Activated CD4-positive, alpha-beta T cell treated with anti-CD3 and anti-CD28 coated beads, Interleukin-2, amount 10 ng/mL, durations not matched to agents 7 days and 5 days (primary cell): ENCODE measurements at regions of chr22 and their contacts with region 1.

Region 1: GRCh38 chr22:36856121-36856791 is 4.5 kb upstream of the NCF4 start:
- DNase-seq: peak; percentile 94
- H3K4me3 Mint-ChIP-seq: no peak overlapping the region
- H3K27ac Mint-ChIP-seq: peak overlapping the region; percentile 57
- H3K4me1 Mint-ChIP-seq: peaks cover 48% of the 10 kb centered on the region
- H3K27me3 Mint-ChIP-seq: peaks cover 8% of the 10 kb centered on the region

Region 2: DNA sequence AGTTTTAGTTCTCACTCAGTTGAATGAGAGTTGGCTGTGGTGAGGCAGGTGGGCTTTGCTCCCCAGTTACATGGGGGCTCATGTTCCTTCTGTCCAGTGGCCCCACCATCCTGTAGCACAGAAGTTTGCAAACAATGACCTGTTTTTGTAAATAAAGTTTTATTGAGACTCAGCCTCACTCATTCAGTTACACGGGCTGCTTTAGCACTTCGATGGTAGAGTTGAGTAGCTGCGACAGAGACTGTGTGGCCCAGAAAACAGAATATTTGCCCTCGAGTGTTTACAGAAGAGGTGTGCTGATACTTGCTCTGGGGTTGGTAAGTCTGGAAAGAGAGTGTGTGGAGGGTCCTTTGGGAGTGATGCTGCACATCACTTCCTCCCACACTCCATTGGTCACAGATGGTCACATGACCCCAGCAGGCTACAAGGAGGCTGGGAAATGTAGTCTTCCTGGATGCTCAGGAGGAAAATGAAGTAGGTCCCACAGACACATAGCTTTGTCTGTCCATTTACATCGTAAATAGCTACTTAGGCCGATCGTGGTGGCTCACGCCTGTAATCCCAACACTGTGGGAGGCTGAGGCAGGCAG is 115.0 kb before region 1 on chr22:
- CTCF ChIA-PET with region 1: no interaction called
- POLR2A ChIA-PET with region 1: no interaction called
- DNase-seq: no peak
- H3K4me3 Mint-ChIP-seq: no peak overlapping the region
- H3K27ac Mint-ChIP-seq: no peak overlapping the region
- H3K4me1 Mint-ChIP-seq: no peaks in the 10 kb centered on the region
- H3K27me3 Mint-ChIP-seq: peaks cover 9% of the 10 kb centered on the region

Region 3: GRCh38 chr22:36781656-36782627 is 74.3 kb before region 1 on chr22:
- CTCF ChIA-PET with region 1: interaction called, 25 read pairs
- POLR2A ChIA-PET with region 1: no interaction called
- DNase-seq: peak; percentile 87
- H3K4me3 Mint-ChIP-seq: no peak overlapping the region
- H3K27ac Mint-ChIP-seq: peak overlapping the region; percentile 28
- H3K4me1 Mint-ChIP-seq: peaks cover 17% of the 10 kb centered on the region
- H3K27me3 Mint-ChIP-seq: peaks cover 2% of the 10 kb centered on the region

Region 4: GRCh38 chr22:36811094-36811800 is 45.0 kb before region 1 on chr22:
- CTCF ChIA-PET with region 1: interaction called, 11 read pairs
- POLR2A ChIA-PET with region 1: no interaction called
- DNase-seq: no peak
- H3K4me3 Mint-ChIP-seq: no peak overlapping the region
- H3K27ac Mint-ChIP-seq: no peak overlapping the region
- H3K4me1 Mint-ChIP-seq: peaks cover 19% of the 10 kb centered on the region
- H3K27me3 Mint-ChIP-seq: peaks cover 35% of the 10 kb centered on the region

Region 5: GRCh38 chr22:36871406-36872081 is 15.3 kb after region 1 on chr22:
- CTCF ChIA-PET with region 1: interaction called, 47 read pairs
- POLR2A ChIA-PET with region 1: no interaction called
- DNase-seq: no peak
- H3K4me3 Mint-ChIP-seq: no peak overlapping the region
- H3K27ac Mint-ChIP-seq: no peak overlapping the region
- H3K4me1 Mint-ChIP-seq: peaks cover 25% of the 10 kb centered on the region
- H3K27me3 Mint-ChIP-seq: no peaks in the 10 kb centered on the region

Region 6: DNA sequence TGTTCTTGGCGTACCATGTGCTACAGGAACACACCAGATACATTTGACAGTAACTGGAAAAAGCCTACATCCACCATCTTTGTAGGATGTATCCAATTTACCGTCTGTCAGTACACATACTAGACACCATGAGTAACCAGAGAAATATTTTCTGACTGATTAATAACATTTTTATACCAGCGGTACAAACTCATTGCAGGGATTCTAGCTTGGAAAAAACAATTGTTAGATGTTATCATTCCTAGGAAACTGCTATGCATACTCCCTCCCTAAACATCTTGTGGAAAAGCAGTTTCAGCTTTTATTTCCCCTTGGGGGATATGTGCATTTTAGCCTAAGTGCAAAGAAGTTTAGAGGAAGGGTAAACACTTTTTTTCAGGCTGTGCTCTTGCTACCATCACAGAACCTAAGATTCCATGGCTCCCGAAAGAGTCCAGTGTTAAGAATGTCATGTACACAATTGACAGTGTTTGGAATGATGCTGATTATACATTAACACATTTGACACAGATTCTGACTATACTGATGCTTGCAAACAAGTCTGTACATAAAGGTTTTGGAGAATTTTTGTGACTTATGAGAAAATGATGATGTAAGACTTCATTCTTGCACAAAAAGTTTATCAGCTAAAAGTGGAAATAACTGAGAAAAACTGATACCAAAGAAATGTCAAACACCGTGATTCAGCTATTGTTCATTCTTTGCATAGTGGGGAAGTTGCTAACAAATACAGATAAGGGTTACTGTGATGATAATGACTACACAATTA is 28.3 kb after region 1 on chr22:
- CTCF ChIA-PET with region 1: interaction called, 17 read pairs
- POLR2A ChIA-PET with region 1: no interaction called
- DNase-seq: no peak
- H3K4me3 Mint-ChIP-seq: no peak overlapping the region
- H3K27ac Mint-ChIP-seq: no peak overlapping the region
- H3K4me1 Mint-ChIP-seq: peaks cover 15% of the 10 kb centered on the region
- H3K27me3 Mint-ChIP-seq: peaks cover 3% of the 10 kb centered on the region